B cell (primary cell): ENCODE measurements at regions of chr7 and their contacts with region 1.

Region 1: DNA sequence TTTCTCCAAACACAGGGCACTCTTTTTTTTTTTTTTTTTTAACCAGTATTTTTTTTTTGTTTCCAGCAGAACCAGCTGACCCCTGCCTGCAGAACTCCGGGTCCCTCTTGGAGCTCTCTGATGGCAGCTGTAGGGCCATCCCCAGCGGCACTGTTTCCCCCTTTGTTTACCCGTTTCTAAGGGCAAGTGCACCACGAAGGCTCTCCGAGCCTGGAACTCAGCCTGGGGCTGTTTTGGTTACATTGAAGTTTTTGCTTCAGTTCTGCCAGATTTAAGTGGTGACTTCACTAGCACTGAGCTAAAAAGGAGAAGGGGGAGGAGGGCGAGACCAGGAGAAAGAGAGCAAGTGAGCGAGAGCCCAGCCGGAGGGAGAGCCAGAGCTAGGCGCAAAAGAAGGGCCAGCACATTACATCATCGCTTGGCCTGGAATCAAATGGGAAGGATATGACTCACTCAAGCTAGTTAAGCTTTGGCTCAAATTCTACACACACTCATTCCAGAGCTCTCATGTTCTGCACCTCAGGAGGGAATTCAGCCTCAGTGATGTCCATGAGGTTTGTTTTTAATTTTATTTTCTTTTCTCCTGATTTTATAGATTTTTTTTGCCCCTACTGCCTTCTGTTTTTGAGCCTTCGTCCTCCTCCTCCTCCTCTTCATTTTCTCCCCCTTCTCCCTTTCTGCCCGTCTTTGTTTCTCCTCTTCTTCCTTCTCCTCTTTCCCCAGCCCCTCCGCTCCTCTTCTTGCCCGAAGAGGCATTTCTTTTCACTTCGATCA is 272.3 kb downstream of the TRIL start:
- DNase-seq: peak; percentile 72
- ATAC-seq: peak; percentile 49
- H3K4me3 ChIP-seq: peak overlapping the region; percentile 9 to 88 (median 40)
- H3K4me3 Mint-ChIP-seq: no peak overlapping the region
- H3K27ac ChIP-seq: peak overlapping the region in 1 of 2 donors; percentile 49
- H3K27ac Mint-ChIP-seq: no peak overlapping the region
- H3K4me1 ChIP-seq: peaks cover 31 to 32% of the 10 kb centered on the region in 2 donors
- H3K4me1 Mint-ChIP-seq: peaks cover 1% of the 10 kb centered on the region
- H3K27me3 ChIP-seq: peaks cover 0 to 14% (median 3%) of the 10 kb centered on the region in 4 experiments
- H3K27me3 Mint-ChIP-seq: peaks cover 4% of the 10 kb centered on the region
- CTCF ChIP-seq: no peak

Region 2: DNA sequence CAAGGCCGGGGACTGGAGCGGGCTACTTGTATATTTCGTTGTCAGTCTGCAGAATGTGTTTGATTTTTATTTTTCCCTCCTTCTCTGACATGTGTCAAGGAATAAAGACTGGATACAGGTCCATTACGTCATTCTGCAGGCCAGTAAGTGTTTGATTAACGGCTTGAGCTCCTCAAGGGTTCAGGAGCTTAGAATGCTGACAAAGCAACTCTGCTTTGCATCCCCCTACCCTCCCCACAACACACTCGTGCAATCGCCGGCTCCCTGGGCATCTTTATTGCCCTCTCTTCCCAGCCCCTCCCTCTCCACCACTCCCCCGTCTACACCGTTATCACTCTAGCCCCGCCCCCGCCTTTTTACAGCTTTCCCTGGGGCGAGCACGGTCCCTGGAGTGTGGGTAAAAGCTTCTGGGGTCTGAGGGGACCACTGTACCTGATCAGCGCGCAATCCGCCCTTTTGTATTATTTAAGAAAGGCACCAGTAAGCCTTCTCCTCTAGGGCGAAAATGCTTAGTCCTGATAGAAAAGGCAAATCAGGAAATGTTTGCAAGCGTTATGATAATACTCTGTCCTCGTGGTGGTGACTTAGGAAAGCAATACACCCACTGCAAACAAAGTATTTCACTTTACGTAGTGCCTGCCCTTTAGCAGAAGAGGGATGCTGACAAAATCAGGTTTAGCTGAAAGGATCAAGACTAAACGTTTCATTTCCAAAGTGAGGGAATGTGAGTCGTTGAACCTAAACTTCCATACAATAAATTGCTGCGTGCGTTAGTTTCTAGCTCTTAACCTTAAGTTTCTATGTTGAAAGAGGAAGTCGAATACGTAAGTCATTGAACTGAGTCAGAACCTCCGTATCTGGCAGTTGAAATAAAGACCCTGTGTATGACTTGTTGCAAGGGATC is 275.0 kb before region 1 on chr7:
- CTCF ChIA-PET with region 1: no interaction called
- POLR2A ChIA-PET with region 1: no interaction called
- intact Hi-C with region 1: loop called (anchors 10 kb)
- DNase-seq: peak; percentile 69
- ATAC-seq: peak; percentile 48
- H3K4me3 ChIP-seq: peak overlapping the region; percentile 28 to 73 (median 61)
- H3K4me3 Mint-ChIP-seq: peak overlapping the region; percentile 87
- H3K27ac ChIP-seq: no peak overlapping the region
- H3K27ac Mint-ChIP-seq: no peak overlapping the region
- H3K4me1 ChIP-seq: peaks cover 31 to 39% of the 10 kb centered on the region in 2 donors
- H3K4me1 Mint-ChIP-seq: peaks cover 35% of the 10 kb centered on the region
- H3K27me3 ChIP-seq: peaks cover 0 to 52% (median 43%) of the 10 kb centered on the region in 4 experiments
- H3K27me3 Mint-ChIP-seq: peaks cover 76% of the 10 kb centered on the region
- CTCF ChIP-seq: no peak

Region 3: GRCh38 chr7:28647081-28647421 is 38.8 kb before region 1 on chr7:
- CTCF ChIA-PET with region 1: no interaction called
- POLR2A ChIA-PET with region 1: no interaction called
- intact Hi-C with region 1: no loop called
- DNase-seq: no peak
- ATAC-seq: no peak
- H3K4me3 ChIP-seq: no peak overlapping the region
- H3K4me3 Mint-ChIP-seq: no peak overlapping the region
- H3K27ac ChIP-seq: no peak overlapping the region
- H3K27ac Mint-ChIP-seq: no peak overlapping the region
- H3K4me1 ChIP-seq: no peaks in the 10 kb centered on the region
- H3K4me1 Mint-ChIP-seq: no peaks in the 10 kb centered on the region
- H3K27me3 ChIP-seq: no peaks in the 10 kb centered on the region
- H3K27me3 Mint-ChIP-seq: peaks cover 9% of the 10 kb centered on the region
- CTCF ChIP-seq: no peak